Common myeloid progenitor, CD34-positive (primary cell): ENCODE measurements at regions of chr4 and their contacts with region 1.

Region 1: GRCh38 chr4:153127760-153128494 is 76.3 kb upstream of the TRIM2 start:
- DNase-seq: peak; percentile 83 to 91 (median 86)
- H3K4me3 ChIP-seq: peak overlapping the region in 1 of 7 experiments; percentile 24
- H3K27ac ChIP-seq: no peak overlapping the region
- H3K4me1 ChIP-seq: peaks cover 0 to 2% (median 0%) of the 10 kb centered on the region in 4 experiments
- H3K27me3 ChIP-seq: no peaks in the 10 kb centered on the region

Region 2: DNA sequence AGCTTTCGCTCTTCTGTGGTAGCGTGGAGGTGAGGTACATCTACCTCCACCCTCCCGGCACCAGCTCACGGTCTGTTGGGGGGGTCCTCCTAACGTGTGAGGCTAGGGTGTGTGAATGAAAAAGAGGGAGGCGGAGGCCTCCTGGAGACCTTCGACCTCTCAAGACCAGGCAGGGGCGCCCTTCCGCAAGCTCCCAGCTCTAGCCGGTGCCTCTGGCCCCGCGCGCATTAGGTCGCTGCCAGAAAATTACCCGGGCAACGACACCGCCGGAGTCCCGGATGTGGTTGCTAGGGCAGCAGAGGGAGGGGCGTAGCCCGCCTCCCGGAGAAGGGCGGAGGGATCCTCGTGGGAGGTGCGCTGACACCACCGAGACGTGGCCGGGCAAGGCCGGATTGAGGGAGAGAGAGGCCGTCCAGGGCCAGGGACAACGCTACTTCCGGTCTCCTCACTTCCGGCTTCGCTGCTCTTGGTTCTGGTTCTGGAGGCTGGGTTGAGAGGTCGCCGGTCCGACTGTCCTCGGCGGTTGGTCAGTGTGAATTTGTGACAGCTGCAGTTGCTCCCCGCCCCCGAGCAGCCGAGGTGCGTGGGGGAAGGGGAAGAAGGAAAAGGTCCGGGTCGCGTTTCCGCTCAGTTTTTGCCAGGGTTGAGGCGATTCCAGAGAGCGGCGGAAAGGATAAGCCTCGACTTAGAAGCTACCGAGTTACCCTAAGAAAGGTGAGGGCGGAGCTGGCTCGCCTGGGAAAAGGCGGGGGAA is 348.2 kb before region 1 on chr4 and contains the starts of genes ARFIP1 and TIGD4:
- CTCF ChIA-PET with region 1: no interaction called
- POLR2A ChIA-PET with region 1: no interaction called
- DNase-seq: peak; percentile 91 to 94 (median 94)
- H3K4me3 ChIP-seq: peak within 1 kb of the TSS; percentile 81 to 92 (median 91)
- H3K27ac ChIP-seq: peak within 1 kb of the TSS in 1 of 2 experiments; percentile 72
- H3K4me1 ChIP-seq: peaks cover 12 to 45% (median 36%) of the 10 kb centered on the region in 4 experiments
- H3K27me3 ChIP-seq: no peaks in the 10 kb centered on the region

Region 3: DNA sequence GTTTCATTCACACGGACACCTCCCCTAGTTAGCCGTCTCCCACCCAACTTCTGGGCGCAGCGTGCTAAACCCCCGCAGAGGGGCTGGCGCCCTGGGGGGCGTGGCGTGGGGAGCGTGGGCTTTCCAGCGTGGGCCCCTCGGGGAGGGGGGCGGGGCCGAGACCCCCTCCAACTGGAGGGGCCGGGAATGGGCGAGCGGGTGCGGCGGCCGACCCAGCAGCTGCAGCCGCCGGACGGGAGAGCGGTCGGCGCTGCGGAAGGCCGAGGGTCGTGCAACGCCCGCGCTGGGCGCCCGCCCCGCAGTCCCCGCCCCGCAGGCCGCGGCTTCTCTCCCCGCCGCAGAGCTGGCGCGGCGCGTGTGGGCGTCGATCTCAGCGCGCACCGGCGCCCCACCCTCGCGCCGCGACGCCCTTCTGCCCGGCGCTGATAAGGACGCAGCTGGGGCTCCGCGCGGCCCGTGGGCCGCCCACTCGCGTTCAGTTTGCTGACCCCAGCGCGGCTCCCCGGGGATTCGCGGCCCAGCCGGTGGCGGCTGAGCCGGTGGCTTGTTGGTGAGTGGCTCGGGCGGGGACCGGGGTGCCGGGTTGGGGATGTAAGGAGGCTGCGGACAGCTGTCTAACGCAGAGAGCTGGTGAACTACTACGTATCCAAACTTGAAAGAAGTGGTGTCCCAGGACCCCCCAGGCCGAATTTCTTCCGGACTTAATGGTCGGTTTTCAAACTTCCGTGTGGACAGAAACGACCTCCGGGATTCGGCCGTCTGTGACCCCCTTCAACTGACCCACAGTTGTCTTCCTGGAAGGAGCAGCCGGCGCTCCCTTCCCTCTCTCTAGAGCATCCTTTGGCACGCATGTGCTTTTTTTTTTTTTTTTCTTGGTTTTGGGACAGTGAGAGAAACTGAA is 190.3 kb before region 1 on chr4:
- CTCF ChIA-PET with region 1: interaction called, 12 read pairs
- POLR2A ChIA-PET with region 1: no interaction called
- DNase-seq: peak; percentile 34 to 83 (median 74)
- H3K4me3 ChIP-seq: peak overlapping the region; percentile 35 to 81 (median 64)
- H3K27ac ChIP-seq: no peak overlapping the region
- H3K4me1 ChIP-seq: peaks cover 5 to 32% (median 30%) of the 10 kb centered on the region in 4 experiments
- H3K27me3 ChIP-seq: peaks cover 5 to 81% (median 29%) of the 10 kb centered on the region in 5 experiments

Region 4: GRCh38 chr4:153089742-153090141 is 38.2 kb before region 1 on chr4:
- CTCF ChIA-PET with region 1: interaction called, 175 read pairs
- POLR2A ChIA-PET with region 1: interaction called, 4 read pairs
- DNase-seq: no peak
- H3K4me3 ChIP-seq: no peak overlapping the region
- H3K27ac ChIP-seq: no peak overlapping the region
- H3K4me1 ChIP-seq: peaks cover 0 to 6% (median 0%) of the 10 kb centered on the region in 4 experiments
- H3K27me3 ChIP-seq: no peaks in the 10 kb centered on the region

Region 5: DNA sequence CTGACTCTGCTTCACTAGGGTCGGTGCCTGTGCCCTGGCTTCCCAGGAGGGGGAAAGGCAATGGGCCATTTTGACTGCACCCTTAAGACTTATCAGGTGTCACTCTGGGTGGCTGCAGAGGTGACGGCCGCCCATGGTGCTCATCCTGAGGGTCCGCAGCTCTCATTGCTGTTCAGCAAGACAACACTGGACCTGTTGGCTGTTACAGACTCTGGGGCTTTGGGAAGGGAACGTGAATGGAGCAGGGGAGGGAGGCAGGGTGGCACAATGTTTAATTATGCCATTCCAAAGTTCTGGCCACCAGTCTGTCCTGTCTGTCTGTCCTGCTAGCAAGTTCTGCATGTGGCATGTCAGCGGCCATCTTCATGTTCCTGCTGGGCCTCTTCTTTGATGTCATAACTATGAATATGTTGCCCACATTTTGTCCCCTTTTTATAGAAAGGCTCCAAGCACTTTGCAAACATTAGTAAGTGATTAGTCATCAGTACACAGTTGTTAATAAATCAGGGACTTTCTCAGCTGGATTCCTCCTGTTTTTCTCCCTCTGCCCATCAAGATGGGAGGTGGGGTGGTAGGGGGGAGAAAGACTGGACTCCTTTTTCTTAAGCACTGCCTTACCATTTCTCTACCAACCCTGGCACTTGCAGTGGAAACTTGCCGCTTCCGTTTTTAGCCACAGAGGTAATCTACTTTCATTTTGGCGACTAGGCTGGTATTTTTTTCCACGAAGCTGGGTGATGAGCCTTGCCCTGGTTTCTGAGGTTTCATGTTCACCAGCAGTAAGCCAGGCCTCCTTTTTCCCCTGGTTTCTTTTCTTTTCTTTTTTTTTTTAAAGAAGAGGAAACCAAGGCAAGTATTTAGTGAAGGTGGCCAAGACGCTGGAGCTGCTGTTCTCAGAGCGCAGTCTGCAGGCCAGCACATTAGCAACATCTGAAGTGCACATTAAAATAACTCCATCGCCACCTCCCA is 12.3 kb before region 1 on chr4:
- CTCF ChIA-PET with region 1: interaction called, 38 read pairs
- POLR2A ChIA-PET with region 1: no interaction called
- DNase-seq: peak; percentile 79 to 94 (median 93)
- H3K4me3 ChIP-seq: peak overlapping the region in 5 of 7 experiments; percentile 25 to 69 (median 43)
- H3K27ac ChIP-seq: peak overlapping the region in 1 of 2 experiments; percentile 66
- H3K4me1 ChIP-seq: peaks cover 5 to 38% (median 33%) of the 10 kb centered on the region in 4 experiments
- H3K27me3 ChIP-seq: no peaks in the 10 kb centered on the region

Region 6: GRCh38 chr4:153153339-153153871 is 25.5 kb after region 1 on chr4:
- CTCF ChIA-PET with region 1: interaction called, 17 read pairs
- POLR2A ChIA-PET with region 1: no interaction called
- DNase-seq: peak; percentile 68 to 90 (median 84)
- H3K4me3 ChIP-seq: peak overlapping the region; percentile 54 to 83 (median 65)
- H3K27ac ChIP-seq: peak overlapping the region in 1 of 2 experiments; percentile 51
- H3K4me1 ChIP-seq: peaks cover 7 to 37% (median 32%) of the 10 kb centered on the region in 4 experiments
- H3K27me3 ChIP-seq: peaks cover 0 to 3% (median 0%) of the 10 kb centered on the region in 5 experiments